Activated T-helper 1 cell treated with anti-CD3 and anti-CD28 coated beads, Interleukin-12 subunit alpha, Interleukin-12 subunit beta, Interleukin-2, Interleukin-4 antibody, amounts not matched to agents 30 ng/mL and 10 ng/mL and 1 ng/mL, durations not matched to agents 14 hours and 24 hours and 36 hours (primary cell): ENCODE measurements at regions of chr9 and their contacts with region 1.

Region 1: DNA sequence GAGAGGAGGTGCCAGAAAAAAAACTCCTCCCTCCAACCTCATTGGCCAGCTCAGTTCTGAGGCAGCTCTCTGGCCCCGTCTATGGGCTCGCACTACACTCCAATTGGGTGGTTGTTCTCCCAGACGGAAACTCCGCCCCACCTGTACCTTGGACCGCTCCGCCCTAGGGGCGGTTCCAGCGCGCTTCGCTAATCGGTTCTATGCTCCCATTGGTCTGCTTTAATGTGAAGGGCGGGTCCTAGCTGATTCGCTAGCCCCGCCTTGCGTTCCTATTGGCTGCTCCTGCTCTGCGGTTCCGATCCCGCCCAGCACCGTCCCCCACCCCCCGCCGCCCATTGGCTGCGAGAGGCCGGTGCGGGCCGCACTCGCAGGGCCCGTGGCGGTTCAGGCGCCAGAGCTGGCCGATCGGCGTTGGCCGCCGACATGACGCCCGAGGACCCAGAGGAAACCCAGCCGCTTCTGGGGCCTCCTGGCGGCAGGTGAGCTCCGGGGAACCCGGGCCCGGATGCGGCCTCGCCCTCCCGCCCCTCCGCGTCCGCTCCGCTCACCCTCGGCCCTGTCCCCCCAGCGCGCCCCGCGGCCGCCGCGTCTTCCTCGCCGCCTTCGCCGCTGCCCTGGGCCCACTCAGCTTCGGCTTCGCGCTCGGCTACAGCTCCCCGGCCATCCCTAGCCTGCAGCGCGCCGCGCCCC is at the start of gene SLC2A8:
- DNase-seq: peak; percentile 96
- H3K4me3 Mint-ChIP-seq: peak within 1 kb of the TSS; percentile 79
- H3K27ac Mint-ChIP-seq: no peak within 1 kb of the TSS
- H3K4me1 Mint-ChIP-seq: peaks cover 18% of the 10 kb centered on the region
- H3K27me3 Mint-ChIP-seq: peaks cover 57% of the 10 kb centered on the region
- total RNA-seq, gene SLC2A8: 10.4 and 11.6 TPM in 2 replicates

Region 2: DNA sequence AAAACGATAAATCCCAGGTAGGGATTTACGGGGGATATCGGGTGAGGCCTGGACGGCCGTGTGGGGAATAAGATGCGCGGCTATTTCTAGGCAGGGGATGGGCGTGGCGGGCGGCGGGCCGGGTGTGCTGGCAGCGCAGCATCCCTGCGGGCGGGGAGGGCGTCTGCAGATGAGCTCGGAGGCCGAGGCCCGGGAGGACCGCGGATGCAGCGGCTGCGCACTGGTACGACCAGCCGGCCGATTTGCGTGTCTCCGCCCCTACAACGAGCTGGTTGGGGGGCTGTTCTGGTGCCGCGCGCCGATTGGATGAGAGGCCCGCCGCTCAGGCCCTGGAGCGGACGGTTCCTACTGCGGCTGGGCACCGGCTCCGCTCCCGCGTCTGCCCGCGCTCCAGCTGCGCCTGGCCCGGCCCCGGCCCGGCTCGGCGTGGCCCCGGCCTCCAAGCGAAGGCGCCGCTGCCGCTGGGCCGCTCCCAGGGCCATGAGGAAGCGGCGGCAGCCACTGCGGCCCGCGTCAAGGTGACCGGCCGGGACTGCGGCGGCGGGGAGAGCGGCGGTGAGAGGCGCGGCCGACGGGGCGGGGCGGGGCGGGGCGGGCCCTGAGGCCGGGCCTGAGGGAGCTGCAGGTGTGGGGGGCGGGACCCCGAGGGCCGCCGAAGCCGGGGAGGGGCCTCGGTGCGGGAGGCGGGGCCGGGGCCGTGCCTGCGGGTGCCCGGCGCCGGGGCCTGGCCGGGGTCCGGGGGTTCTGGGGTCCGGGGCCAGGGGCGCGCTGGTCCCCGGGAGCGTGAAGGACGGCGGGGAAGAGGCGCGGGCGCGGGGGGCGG is 482.3 kb before region 1 on chr9 and contains the start of gene RALGPS1:
- intact Hi-C with region 1: loop called (anchors 5 kb)
- DNase-seq: peak; percentile 91
- H3K4me3 Mint-ChIP-seq: peak within 1 kb of the TSS; percentile 73
- H3K27ac Mint-ChIP-seq: no peak within 1 kb of the TSS
- H3K4me1 Mint-ChIP-seq: peaks cover 6% of the 10 kb centered on the region
- H3K27me3 Mint-ChIP-seq: peaks cover 17% of the 10 kb centered on the region
- total RNA-seq, gene RALGPS1: 1.4 and 1.8 TPM in 2 replicates

Region 3: DNA sequence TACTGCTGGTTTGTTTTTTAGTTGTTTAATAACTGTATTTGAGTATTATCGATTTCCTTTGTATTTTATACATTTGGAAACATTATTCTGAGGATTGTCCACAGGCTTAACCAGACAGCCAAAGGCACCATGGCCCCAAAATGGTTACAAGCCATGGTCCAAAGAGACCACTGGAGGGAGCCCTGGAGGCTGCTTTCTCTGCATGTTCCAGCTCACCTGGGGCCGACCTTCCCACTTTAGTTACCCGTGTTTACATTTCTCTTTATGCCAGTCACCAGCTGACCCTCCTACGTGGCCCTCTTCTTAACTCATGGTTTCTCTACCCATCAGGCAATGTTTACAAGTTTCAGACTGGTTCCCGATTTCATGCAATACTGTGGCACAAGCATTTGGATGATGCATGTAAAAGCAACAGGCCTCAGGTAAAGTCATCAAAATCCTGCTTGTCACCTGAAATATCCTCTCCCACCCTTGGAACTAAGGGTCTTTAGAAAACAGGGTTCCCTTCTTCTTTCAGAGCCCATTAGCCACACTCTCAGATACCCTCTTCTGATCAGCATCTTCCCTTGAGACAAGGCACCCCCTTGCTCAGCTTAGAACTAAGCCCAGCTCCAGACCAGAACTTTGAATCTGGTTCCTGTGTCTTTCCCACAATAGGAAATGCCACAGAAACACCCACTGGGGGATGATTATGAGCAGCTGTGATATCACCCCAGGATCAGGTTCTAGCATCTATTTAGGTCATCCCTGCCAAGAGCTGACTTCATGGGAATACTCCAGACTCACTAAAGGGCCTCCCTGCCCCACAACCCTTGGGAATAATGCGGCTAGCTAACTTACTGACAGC is 182.3 kb before region 1 on chr9:
- intact Hi-C with region 1: loop called (anchors 2 kb)
- DNase-seq: peak; percentile 44
- H3K4me3 Mint-ChIP-seq: no peak overlapping the region
- H3K27ac Mint-ChIP-seq: no peak overlapping the region
- H3K4me1 Mint-ChIP-seq: no peaks in the 10 kb centered on the region
- H3K27me3 Mint-ChIP-seq: peaks cover 7% of the 10 kb centered on the region

Region 4: DNA sequence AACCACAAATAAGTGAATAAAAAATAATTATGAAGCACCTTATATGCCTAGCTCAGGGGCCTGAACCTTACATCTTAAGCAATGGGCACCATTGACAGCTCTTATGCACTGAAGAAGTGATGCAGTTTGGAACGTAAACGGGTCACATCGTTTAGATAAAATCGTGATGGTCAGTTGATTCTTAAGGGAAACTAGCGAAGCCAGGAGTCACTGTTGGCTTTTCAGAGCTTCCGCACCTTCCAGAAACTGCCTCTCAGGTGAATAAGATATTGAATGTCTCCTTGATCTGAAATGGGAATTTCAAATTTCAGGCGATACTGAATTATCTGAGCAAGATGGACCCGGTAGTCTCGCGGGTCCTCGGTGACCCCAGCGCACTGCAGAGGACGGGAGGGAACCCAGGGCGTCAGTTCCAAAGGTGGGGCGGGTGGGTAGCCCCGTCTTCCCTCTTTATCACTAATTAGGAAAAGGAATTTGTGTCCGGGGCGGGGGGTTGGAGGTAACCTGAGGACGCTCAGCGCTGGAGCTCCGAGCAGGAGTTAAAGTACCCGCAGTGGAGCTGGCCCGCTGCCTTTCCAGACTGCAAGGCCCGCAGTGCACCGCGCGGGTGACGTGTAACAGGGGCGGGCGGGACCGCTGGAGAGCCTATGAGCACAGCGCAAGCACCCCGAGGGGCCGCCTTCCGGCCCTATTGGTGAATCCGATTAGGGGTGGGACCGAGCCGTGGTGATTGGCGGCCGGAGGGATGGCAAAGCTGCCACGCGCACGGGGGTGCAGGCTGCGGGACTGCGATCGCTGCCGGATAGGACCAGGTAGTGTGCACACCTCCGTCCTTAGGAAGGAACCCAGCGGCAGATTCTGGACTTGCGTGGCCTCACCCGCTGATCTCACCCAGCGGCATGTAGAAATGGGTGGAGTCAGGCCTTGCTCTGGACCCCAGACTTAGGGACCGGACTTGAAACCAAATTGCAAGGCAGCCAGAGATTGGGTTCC is 152.0 kb before region 1 on chr9:
- intact Hi-C with region 1: loop called (anchors 1 kb)
- DNase-seq: peak; percentile 94
- H3K4me3 Mint-ChIP-seq: peak overlapping the region; percentile 83
- H3K27ac Mint-ChIP-seq: peak overlapping the region; percentile 21
- H3K4me1 Mint-ChIP-seq: peaks cover 12% of the 10 kb centered on the region
- H3K27me3 Mint-ChIP-seq: peaks cover 9% of the 10 kb centered on the region

Region 5: GRCh38 chr9:127423934-127424675 is 27.2 kb after region 1 on chr9 and contains the start of gene ZNF79:
- intact Hi-C with region 1: loop called (anchors 1 kb)
- DNase-seq: peak; percentile 92
- H3K4me3 Mint-ChIP-seq: peak within 1 kb of the TSS; percentile 99
- H3K27ac Mint-ChIP-seq: peak within 1 kb of the TSS; percentile 97
- H3K4me1 Mint-ChIP-seq: peaks cover 59% of the 10 kb centered on the region
- H3K27me3 Mint-ChIP-seq: peaks cover 3% of the 10 kb centered on the region
- total RNA-seq, gene ZNF79: 21.7 and 23.1 TPM in 2 replicates

Region 6: DNA sequence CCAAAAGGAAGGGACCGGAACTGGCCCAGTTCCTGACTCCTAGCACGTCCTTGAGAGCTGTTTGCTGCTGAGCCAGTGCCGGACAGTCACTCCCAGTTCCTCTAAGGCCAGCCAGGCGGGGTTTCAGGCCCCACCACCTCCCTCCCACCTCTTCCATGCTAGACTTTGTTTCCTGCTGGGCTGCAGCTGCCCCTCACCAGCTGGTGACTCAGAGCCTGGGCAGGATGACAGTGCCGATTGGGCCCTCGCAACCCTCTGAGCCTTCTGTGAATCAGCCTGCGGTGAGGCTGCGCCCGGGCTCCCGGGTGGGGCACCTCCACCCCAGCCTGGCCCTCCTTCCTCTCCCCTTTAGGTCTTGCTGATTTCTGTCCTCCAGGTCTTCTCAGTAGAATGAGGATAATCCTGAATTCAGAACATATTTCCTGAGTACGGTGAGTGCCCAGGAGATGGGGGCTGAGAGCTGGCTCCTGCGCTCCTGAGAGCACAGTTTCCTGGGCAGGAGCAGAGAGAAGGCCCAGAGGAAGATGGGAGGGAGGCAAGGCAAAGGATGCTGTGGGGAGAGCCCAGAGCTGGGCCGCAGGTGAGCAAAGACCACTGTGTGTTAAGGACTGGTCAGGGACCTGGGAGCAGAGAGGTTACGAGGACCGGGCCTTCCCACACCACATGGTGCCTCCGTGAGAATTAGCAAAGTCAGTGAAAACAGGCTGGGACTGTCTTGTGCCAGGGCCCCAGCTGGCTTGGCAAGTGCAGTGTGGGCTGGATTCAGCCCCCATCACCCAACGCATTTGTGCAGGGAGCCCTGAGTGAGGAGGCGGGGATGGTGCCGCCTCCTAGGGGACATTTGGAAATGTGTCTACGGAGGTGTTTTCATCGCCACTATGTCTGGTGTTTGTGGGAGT is 182.3 kb after region 1 on chr9:
- intact Hi-C with region 1: loop called (anchors 10 kb)
- DNase-seq: peak; percentile 66
- H3K4me3 Mint-ChIP-seq: peak overlapping the region; percentile 78
- H3K27ac Mint-ChIP-seq: peak overlapping the region; percentile 76
- H3K4me1 Mint-ChIP-seq: peaks cover 44% of the 10 kb centered on the region
- H3K27me3 Mint-ChIP-seq: no peaks in the 10 kb centered on the region

Region 7: GRCh38 chr9:127660886-127661741 is 264.2 kb after region 1 on chr9:
- intact Hi-C with region 1: no loop called
- DNase-seq: no peak
- H3K4me3 Mint-ChIP-seq: no peak overlapping the region
- H3K27ac Mint-ChIP-seq: no peak overlapping the region
- H3K4me1 Mint-ChIP-seq: no peaks in the 10 kb centered on the region
- H3K27me3 Mint-ChIP-seq: peaks cover 1% of the 10 kb centered on the region